Activated naive CD4-positive, alpha-beta T cell treated with anti-CD3 and anti-CD28 coated beads, Interleukin-2, amount 10 ng/mL, durations not matched to agents 7 days and 5 days (primary cell): ENCODE measurements at regions of chr6 and their contacts with region 1.

Region 1: GRCh38 chr6:52361945-52362442 is at the start of gene PAQR8:
- DNase-seq: peak; percentile 84
- H3K4me3 Mint-ChIP-seq: peak within 1 kb of the TSS; percentile 88
- H3K27ac Mint-ChIP-seq: peak within 1 kb of the TSS; percentile 86
- H3K4me1 Mint-ChIP-seq: peaks cover 42% of the 10 kb centered on the region
- H3K27me3 Mint-ChIP-seq: peaks cover 7% of the 10 kb centered on the region

Region 2: GRCh38 chr6:51844336-51844735 is 517.7 kb before region 1 on chr6:
- CTCF ChIA-PET with region 1: no interaction called
- DNase-seq: no peak
- H3K4me3 Mint-ChIP-seq: no peak overlapping the region
- H3K27ac Mint-ChIP-seq: no peak overlapping the region
- H3K4me1 Mint-ChIP-seq: no peaks in the 10 kb centered on the region
- H3K27me3 Mint-ChIP-seq: peaks cover 4% of the 10 kb centered on the region

Region 3: GRCh38 chr6:52304983-52305390 is 57.0 kb before region 1 on chr6:
- CTCF ChIA-PET with region 1: interaction called, 21 read pairs
- DNase-seq: no peak
- H3K4me3 Mint-ChIP-seq: peak overlapping the region; percentile 19
- H3K27ac Mint-ChIP-seq: peak overlapping the region; percentile 81
- H3K4me1 Mint-ChIP-seq: peaks cover 65% of the 10 kb centered on the region
- H3K27me3 Mint-ChIP-seq: no peaks in the 10 kb centered on the region

Region 4: GRCh38 chr6:52389626-52390360 is 27.8 kb after region 1 on chr6:
- CTCF ChIA-PET with region 1: interaction called, 42 read pairs
- DNase-seq: peak; percentile 69
- H3K4me3 Mint-ChIP-seq: peak overlapping the region; percentile 66
- H3K27ac Mint-ChIP-seq: peak overlapping the region; percentile 98
- H3K4me1 Mint-ChIP-seq: peaks cover 80% of the 10 kb centered on the region
- H3K27me3 Mint-ChIP-seq: no peaks in the 10 kb centered on the region

Region 5: GRCh38 chr6:52399511-52400312 is 37.7 kb after region 1 on chr6:
- CTCF ChIA-PET with region 1: interaction called, 17 read pairs
- DNase-seq: peak; percentile 60
- H3K4me3 Mint-ChIP-seq: no peak overlapping the region
- H3K27ac Mint-ChIP-seq: peak overlapping the region; percentile 97
- H3K4me1 Mint-ChIP-seq: peaks cover 68% of the 10 kb centered on the region
- H3K27me3 Mint-ChIP-seq: no peaks in the 10 kb centered on the region